CD4-positive, alpha-beta memory T cell (primary cell): ENCODE measurements at regions of chr1 and their contacts with region 1.

Region 1: DNA sequence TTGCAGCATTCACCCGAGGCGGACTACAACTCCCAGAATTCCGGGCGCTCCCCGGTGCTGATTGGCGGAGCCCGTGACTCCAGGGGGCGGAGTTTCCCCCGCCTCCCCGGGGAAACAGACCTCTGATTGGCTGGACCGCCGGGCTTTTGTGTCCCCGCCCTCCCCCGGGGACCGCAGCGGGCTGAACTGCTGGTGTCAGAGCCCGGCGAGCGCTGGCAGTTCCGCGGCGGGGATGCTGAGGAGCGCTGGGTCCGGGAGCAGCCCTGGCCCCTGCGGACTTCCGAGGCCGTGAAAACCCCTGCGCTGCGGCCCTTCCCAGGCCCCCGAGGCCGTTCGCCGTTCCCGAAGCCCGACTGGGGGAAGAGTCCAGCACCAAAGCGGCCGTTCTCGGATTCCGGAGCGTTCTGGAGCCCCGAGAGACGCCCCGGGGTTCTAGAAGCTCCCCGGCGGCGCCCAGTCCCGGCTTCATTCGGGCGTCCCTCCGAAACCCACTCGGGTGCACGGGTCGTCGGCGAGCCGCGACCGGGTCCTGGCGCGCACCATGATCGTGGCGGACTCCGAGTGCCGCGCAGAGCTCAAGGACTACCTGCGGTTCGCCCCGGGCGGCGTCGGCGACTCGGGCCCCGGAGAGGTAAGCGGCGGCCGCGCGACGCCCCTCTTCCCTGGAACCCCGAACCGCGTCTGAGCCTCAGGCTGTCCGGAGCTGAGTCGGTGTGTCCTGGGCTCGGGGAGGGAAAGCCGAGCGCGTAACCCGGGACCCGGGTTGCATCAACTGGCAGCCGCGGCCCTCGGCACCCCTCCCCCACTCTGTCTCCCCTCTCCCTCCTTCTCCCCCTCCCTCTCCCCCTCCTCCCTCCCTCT is at the start of gene SESN2:
- DNase-seq: peak; percentile 99
- H3K4me3 ChIP-seq: peak within 1 kb of the TSS; percentile 69 to 82
- H3K4me3 Mint-ChIP-seq: peak within 1 kb of the TSS; percentile 77 to 90 (median 82)
- H3K27ac ChIP-seq: peak within 1 kb of the TSS; percentile 67
- H3K27ac Mint-ChIP-seq: peak within 1 kb of the TSS; percentile 72 to 88 (median 84)
- H3K4me1 ChIP-seq: peaks cover 59% of the 10 kb centered on the region
- H3K4me1 Mint-ChIP-seq: peaks cover 29 to 58% (median 43%) of the 10 kb centered on the region in 4 donors
- H3K27me3 ChIP-seq: no peaks in the 10 kb centered on the region
- H3K27me3 Mint-ChIP-seq: no peaks in the 10 kb centered on the region
- total RNA-seq, gene SESN2: 5.7 to 6.4 TPM

Region 2: DNA sequence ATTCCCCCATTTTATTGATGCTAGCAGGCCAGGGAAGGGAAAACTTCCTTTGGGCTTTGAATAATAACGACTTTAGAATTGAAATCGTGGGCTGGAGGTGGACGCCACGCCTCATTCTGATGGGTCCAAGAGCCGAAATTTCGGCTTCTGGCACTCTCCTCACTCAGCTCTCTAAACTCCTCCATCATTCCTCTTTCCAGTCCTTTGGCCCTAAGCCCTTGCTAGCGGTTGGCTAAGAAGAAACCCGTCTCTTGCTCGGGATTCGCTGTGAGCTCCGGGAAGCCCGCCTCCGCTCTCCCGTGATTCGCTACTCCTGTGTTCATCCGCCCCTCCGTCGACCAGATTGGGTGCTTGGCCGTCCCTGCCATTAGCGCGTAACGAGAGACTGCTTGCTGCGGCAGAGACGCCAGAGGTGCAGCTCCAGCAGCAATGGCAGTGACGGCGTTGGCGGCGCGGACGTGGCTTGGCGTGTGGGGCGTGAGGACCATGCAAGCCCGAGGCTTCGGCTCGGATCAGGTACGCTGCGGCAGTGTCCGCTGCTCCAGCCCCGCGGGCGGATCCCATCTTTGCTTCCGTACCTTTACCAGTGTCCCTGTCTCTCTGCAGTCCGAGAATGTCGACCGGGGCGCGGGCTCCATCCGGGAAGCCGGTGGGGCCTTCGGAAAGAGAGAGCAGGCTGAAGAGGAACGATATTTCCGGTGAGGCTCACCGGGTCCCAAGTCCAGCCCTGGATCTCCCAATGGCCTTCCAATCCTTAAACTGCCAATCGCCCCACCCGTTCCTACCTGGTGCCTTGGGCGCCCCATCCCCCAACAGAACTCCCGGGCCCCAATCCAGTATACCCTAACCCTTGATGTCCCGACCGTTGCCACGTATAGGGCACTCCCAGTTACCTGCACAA is 23.5 kb before region 1 on chr1 and contains the start of gene ATP5IF1:
- CTCF ChIA-PET with region 1: interaction called, 3 read pairs
- POLR2A ChIA-PET with region 1: interaction called, 24 read pairs
- intact Hi-C with region 1: loop called (anchors 1 kb)
- DNase-seq: peak; percentile 92 to 97 (median 95)
- H3K4me3 ChIP-seq: peak within 1 kb of the TSS; percentile 82 to 97
- H3K4me3 Mint-ChIP-seq: peak within 1 kb of the TSS in 2 of 8 donors; percentile 35 to 57
- H3K27ac ChIP-seq: peak within 1 kb of the TSS; percentile 86
- H3K27ac Mint-ChIP-seq: peak within 1 kb of the TSS in 1 of 7 donors; percentile 18
- H3K4me1 ChIP-seq: peaks cover 56% of the 10 kb centered on the region
- H3K4me1 Mint-ChIP-seq: peaks cover 8 to 30% (median 13%) of the 10 kb centered on the region in 4 donors
- H3K27me3 ChIP-seq: no peaks in the 10 kb centered on the region
- H3K27me3 Mint-ChIP-seq: no peaks in the 10 kb centered on the region
- total RNA-seq, gene ATP5IF1: 111 TPM